ENCODE measurements at regions of chr18 and their contacts with region 1.

Region 1: DNA sequence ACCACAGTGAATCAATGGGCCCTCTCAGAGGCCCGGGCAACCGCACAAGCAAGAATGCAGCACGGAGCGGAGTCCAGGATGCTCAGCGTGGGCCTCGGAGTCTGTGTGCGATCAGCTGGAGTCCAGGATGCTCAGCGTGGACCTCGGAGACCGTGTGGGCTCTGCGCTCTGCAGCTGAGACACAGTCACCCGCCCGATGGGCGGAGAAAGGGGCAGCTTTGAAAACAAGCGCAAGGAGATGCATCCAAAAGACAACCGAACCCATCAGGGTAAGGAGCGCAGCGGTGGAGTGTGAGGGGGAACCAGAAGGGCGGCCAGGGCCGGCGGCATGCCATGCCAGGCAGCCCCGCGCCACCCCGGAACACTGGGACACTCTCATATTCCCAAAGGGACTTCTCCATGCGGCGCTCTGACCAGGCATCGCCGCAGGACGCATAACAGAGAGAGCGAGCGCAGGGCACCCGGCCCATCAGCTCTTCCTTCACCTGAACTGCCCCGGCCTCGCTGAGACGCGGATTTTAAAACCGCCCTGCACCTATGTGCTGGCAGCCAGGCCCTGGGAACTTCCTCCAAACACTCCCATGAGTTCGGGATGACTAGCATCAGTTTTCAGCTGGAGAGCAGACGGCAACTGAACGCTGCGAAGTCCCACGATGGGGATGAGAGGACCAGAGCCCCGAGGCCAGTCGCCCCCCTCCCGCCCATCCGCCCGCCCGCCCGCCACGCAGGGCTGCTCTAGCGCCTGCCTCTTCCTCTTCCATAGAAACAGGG is 44.7 kb downstream of the MC5R start:
- DNase-seq: peak; percentile 77

Region 2: DNA sequence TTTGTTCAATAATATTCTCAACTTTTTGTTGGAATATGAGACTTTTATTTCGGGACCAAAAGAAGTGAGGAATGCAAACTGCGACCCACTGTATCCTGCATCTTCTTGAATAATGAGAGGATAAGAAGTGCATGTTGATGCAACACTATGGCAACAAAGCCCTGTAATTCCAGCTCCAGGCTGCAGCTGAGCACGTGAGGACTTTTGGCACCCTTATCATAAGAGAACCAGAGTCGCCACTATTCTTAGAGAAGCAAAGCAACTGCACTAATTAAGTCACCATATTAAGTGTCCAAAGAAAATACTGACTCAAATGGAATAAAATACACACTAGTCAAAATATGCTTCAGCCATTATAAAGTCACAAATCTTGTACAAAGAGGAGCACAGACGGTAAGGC is 208.2 kb before region 1 on chr18:
- in situ Hi-C with region 1: no loop called
- DNase-seq: no peak

Region 3: DNA sequence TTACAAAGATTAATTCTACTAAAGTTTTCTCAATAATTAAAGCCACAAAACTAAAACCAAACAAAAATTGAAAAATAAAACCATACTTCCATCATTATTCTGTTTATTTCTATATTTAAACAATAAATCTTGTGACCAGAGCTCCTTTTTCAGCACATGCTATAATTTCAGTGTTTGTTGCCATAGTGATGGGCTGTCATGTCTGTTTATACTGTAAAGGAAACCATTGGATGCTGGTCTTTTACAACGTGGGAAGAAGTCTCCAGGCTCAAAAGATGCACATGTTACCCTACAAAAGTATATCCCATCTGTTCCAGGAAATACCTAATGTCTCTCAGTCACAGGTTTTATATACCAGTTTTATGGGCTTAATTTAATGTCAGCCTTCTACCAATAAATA is 146.7 kb after region 1 on chr18:
- in situ Hi-C with region 1: loop called (anchors 25 kb)
- DNase-seq: no peak

Measured in G401 (cell line).